ENCODE measurements at regions of chr1 and their contacts with region 1.

Region 1: GRCh38 chr1:227999056-227999930 is 7.5 kb upstream of the WNT3A start:
- DNase-seq: peak; percentile 94
- H3K4me3 Mint-ChIP-seq: no peak overlapping the region
- H3K27ac Mint-ChIP-seq: no peak overlapping the region
- H3K4me1 Mint-ChIP-seq: peaks cover 17% of the 10 kb centered on the region
- H3K27me3 Mint-ChIP-seq: peaks cover 1% of the 10 kb centered on the region
- CTCF ChIP-seq: peak; percentile 100

Region 2: GRCh38 chr1:227946624-227947385 is 52.5 kb before region 1 on chr1:
- CTCF ChIA-PET with region 1: interaction called, 10 read pairs
- POLR2A ChIA-PET with region 1: interaction called, 11 read pairs
- intact Hi-C with region 1: no loop called
- DNase-seq: peak; percentile 96
- H3K4me3 Mint-ChIP-seq: peak overlapping the region; percentile 66
- H3K27ac Mint-ChIP-seq: peak overlapping the region; percentile 86
- H3K4me1 Mint-ChIP-seq: peaks cover 14% of the 10 kb centered on the region
- H3K27me3 Mint-ChIP-seq: no peaks in the 10 kb centered on the region
- CTCF ChIP-seq: peak; percentile 98

Region 3: DNA sequence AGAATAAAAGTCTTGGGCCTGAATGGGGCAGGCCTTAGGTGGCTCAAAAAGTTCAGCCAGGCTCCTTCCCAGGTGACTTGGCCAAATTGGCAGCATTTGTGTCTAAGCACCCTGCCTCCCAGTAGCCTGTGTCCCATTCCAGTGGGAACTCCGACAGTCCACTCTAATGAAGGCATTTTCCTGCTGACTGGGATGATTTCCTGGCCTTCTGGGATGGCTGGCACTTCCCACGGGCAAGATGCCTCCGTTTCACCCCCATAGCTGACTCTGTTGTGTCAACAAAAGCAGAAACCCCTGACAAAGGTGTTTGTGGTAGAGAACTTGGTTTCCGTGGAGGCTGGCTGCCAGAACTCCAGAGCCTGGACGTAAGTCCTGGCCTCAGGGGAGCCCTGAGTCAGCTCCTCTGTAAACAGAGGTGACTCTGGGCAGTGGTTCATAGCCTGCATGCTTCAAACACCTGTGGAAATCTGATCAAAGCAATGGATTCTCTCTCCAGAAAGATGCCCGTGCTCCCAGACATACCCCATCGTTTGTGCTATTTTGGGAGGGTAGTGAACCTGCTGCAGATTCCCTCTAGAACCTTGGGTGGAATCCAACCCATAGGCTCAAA is 44.1 kb after region 1 on chr1:
- CTCF ChIA-PET with region 1: interaction called, 33 read pairs
- POLR2A ChIA-PET with region 1: interaction called, 9 read pairs
- intact Hi-C with region 1: no loop called
- DNase-seq: peak; percentile 99
- H3K4me3 Mint-ChIP-seq: no peak overlapping the region
- H3K27ac Mint-ChIP-seq: no peak overlapping the region
- H3K4me1 Mint-ChIP-seq: peaks cover 18% of the 10 kb centered on the region
- H3K27me3 Mint-ChIP-seq: no peaks in the 10 kb centered on the region
- CTCF ChIP-seq: no peak

Region 4: DNA sequence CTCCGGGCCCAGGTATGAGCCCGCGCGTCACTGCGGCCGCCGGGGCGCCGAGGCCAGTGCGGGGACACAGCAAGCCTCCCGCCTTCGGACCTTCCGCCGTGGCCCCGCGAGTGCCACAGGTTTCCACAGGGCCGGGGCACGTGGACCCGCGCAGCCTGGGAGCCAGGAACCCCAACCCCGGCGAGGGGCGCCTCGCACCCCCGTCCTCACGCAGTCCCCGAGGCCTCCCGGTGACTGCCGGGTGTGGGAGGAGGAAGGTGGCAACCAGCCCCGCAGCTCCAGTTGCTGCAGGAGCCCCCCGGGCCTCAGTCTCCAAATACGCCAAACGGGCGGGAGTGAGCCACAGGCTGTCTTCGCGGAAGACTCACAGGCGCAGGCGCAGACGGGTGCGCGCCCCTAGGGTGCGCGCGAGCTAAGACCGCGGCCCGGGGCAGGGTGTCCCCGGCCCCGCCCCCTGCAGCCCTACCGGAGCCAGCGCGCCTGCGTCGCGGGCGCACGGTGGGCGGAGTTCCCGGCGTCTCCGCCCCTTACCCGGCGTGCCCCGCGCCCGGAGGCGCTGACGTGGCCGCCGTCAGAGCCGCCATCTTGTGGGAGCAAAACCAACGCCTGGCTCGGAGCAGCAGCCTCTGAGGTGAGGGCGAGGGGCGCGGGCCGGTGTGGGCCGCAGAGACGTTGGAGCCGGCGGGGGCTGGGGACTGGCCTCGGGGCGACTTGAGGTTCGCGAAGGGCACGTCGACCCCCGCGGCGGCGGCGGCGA is 83.0 kb after region 1 on chr1 and contains the start of gene ARF1:
- CTCF ChIA-PET with region 1: interaction called, 72 read pairs
- POLR2A ChIA-PET with region 1: interaction called, 114 read pairs
- intact Hi-C with region 1: no loop called
- DNase-seq: peak; percentile 98
- H3K4me3 Mint-ChIP-seq: peak within 1 kb of the TSS; percentile 98
- H3K27ac Mint-ChIP-seq: peak within 1 kb of the TSS; percentile 97
- H3K4me1 Mint-ChIP-seq: peaks cover 49% of the 10 kb centered on the region
- H3K27me3 Mint-ChIP-seq: no peaks in the 10 kb centered on the region
- CTCF ChIP-seq: no peak
- total RNA-seq, gene ARF1: 870 and 1,140 TPM in 2 replicates

Region 5: DNA sequence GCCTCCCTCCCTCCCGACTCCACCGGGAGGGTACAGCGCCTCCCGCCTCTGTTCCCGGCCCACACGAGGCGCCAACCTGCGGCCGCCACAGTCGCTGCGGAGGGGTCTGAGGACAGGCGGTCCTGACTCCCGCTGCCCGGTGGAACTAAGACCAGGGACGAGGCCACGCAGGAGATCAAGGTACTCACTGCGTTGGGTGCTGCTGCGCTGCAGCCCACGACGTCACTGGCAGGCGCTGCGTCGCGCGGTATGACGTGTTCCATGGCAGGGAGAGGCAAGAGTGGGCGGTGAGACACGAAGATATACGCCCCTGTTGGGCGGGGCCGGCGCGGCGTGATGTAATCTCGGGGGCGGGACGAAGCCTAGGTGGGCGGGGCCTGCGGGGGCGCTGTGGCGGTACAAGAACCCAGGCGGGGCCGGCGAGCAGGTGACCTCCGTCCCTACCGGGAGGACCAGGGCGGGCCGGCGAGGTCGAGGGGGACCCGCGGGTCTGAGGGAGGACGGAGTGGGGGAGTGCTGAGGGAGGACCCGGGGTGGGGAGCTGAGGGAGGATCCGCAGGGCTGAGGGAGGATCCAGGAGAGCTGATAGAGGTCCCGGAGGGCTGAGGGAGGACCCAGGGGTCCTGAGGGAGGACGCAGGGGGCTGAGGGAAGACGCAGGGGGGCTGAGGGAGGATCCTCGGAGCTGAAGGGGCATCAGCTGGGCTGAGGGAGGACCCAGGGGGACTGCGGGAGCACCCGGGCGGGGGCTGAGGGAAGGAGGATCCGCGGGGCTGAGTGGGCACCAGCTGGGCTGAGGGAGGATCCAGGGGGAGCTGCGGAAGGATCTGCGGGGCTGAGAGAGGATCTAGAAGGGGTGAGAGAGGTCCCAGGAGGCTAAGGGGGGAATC is 110.0 kb after region 1 on chr1 and contains the start of gene MRPL55:
- CTCF ChIA-PET with region 1: interaction called, 24 read pairs
- POLR2A ChIA-PET with region 1: interaction called, 7 read pairs
- intact Hi-C with region 1: no loop called
- DNase-seq: peak; percentile 99
- H3K4me3 Mint-ChIP-seq: peak within 1 kb of the TSS; percentile 95
- H3K27ac Mint-ChIP-seq: peak within 1 kb of the TSS; percentile 92
- H3K4me1 Mint-ChIP-seq: peaks cover 12% of the 10 kb centered on the region
- H3K27me3 Mint-ChIP-seq: no peaks in the 10 kb centered on the region
- CTCF ChIP-seq: no peak
- total RNA-seq, gene MRPL55: 85.4 and 111 TPM in 2 replicates

Region 6: GRCh38 chr1:228150461-228151179 is 151.3 kb after region 1 on chr1:
- CTCF ChIA-PET with region 1: interaction called, 11 read pairs
- POLR2A ChIA-PET with region 1: no interaction called
- intact Hi-C with region 1: no loop called
- DNase-seq: peak; percentile 67
- H3K4me3 Mint-ChIP-seq: peak overlapping the region; percentile 44
- H3K27ac Mint-ChIP-seq: peak overlapping the region; percentile 83
- H3K4me1 Mint-ChIP-seq: peaks cover 47% of the 10 kb centered on the region
- H3K27me3 Mint-ChIP-seq: no peaks in the 10 kb centered on the region
- CTCF ChIP-seq: no peak

Region 7: DNA sequence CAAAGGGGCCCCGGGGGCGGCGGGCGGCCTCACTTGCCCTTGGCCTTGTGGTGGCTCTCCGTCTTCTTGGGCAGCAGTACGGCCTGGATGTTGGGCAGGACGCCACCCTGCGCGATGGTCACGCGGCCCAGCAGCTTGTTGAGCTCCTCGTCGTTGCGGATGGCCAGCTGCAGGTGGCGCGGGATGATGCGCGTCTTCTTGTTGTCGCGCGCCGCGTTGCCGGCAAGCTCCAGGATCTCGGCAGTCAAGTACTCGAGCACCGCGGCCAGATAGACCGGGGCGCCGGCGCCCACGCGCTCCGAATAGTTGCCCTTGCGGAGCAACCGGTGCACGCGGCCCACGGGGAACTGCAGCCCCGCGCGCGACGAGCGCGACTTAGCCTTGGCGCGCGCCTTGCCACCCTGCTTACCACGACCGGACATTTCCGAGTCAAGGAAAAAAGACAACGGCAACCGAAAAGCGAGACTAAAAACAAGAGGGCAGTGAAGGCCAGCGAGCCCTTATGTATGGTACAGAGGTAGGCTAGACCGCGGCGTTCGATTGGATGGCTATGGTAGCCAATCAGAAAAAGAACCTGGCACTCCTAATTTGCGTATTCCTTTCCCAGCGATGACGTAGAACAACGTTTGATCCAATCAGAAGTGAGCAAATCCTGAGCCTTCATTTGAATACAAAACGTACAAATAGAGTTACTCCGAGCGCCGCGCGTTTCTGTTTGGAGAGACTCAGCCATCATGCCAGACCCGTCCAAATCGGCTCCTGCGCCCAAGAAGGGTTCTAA is 458.3 kb after region 1 on chr1:
- CTCF ChIA-PET with region 1: interaction called, 15 read pairs
- POLR2A ChIA-PET with region 1: interaction called, 4 read pairs
- intact Hi-C with region 1: loop called (anchors 5 kb)
- DNase-seq: peak; percentile 100
- H3K4me3 Mint-ChIP-seq: peak overlapping the region; percentile 97
- H3K27ac Mint-ChIP-seq: peak overlapping the region; percentile 98
- H3K4me1 Mint-ChIP-seq: peaks cover 35% of the 10 kb centered on the region
- H3K27me3 Mint-ChIP-seq: no peaks in the 10 kb centered on the region
- CTCF ChIP-seq: peak; percentile 52

Measured in MCF 10A (cell line).